ENCODE measurements at regions of chr20 and their contacts with region 1.

Region 1: DNA sequence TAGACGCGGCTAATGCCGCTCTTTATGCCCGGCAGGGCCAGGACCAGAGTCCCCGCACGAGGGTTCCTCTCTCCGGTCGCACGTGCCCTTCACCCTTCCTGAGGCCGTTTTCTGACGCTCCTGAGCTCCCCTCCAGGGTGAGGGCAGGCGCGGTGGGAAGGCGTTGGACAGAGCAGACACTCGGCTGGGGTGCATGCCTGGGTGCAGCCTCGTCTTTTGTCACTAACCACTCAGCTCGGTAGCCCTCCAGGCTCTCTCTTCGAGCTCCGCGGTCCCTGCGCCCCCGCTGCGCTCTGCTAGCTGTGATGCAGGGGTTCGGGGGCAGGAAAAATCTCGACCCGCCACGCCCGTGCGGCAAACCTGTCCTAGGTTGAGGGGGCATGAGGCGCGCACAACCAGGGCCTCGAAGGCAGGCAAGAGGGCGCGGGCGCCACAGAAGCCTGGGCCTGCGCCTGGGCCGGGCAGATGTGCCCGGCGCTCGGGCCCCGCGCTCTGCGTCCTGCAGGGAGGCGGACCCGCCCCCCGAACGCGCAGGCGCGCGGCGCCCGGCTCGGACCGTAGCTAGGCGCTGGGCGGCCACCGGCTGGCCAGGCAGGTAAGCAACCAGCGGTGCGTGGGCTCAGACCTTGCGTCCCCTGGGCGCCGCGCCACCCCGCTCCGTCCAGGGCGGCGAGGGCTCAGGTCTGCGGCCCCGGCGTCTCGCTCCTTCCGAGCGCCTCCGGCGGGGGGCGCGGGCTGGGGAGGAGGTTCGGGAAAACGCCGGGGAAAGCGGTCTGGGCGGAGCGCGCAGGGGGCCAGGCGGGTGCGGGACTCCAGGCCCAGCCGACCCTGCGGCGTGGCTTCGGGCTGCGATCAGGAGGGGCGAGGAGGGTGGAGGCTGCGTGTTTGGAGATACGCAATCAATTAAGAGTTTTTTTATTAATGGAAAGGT is at the start of gene L3MBTL1:
- DNase-seq: peak; percentile 38 to 56
- ATAC-seq: peak; percentile 54 to 74 (median 58)
- H3K4me3 ChIP-seq: peak within 1 kb of the TSS; percentile 69
- H3K27ac ChIP-seq: no peak within 1 kb of the TSS
- H3K4me1 ChIP-seq: no peaks in the 10 kb centered on the region
- H3K27me3 ChIP-seq: peaks cover 0 to 30% (median 6%) of the 10 kb centered on the region in 3 donors
- CTCF ChIP-seq: no peak
- total RNA-seq, gene L3MBTL1: 2.2 to 4.2 (median 3.5) TPM

Region 2: DNA sequence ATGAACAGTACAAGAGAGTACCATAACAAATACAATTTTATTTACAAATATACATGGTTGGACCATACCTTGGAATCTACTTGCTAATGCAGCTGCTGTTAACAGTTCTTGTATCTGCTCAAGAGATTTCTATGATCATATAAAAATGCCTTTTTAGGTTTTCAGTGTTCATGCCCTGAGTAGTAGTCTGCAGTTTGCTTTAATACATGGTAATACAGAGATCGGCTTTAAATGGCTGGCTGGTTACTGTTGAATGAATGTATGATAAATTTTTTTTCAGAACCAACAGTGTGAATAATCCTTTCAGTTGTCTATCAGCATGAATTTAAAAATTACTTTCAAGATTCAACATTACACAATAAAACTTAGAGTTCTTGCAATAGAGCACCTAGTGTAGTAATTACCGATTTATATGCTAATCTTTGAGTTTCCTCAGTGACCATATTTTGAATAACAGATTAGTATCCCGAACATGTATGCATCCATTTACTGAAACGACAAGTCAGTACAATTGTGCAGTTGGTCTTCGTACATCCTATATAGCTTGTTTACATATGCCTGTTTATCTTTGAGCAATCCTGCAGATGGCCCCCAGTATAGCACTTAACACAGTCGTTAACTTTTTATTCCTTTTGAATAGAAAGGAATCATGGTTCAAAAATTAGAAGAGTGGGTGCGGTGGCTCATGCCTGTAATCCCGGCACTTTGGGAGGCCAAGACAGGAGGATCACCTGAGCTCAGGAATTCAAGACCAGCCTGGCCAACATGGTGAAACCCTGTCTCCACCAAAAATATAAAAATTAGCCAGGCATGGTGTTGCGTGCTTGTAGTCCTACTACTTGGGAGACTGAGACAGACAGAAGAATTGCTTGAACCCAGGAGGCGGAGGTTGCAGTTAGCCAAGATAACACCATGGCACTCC is 43.3 kb before region 1 on chr20:
- intact Hi-C with region 1: loop called in 1 of 2 experiments (anchors 5 kb)
- DNase-seq: no peak
- ATAC-seq: no peak
- H3K4me3 ChIP-seq: no peak overlapping the region
- H3K27ac ChIP-seq: no peak overlapping the region
- H3K4me1 ChIP-seq: peaks cover 27% of the 10 kb centered on the region
- H3K27me3 ChIP-seq: no peaks in the 10 kb centered on the region
- CTCF ChIP-seq: no peak